Left colon (tissue), 2 donors: ENCODE measurements at regions of chr7 and their contacts with region 1.

Region 1: GRCh38 chr7:43582503-43583423 is at the start of gene STK17A:
- DNase-seq: peak; percentile 85 to 93
- ATAC-seq: peak; percentile 87
- total RNA-seq, gene STK17A: 16.7 to 28.1 TPM

Region 2: GRCh38 chr7:43700059-43700501 is 117.3 kb after region 1 on chr7:
- intact Hi-C with region 1: loop called (anchors 5 kb)
- DNase-seq: no peak
- ATAC-seq: peak; percentile 66

Region 3: DNA sequence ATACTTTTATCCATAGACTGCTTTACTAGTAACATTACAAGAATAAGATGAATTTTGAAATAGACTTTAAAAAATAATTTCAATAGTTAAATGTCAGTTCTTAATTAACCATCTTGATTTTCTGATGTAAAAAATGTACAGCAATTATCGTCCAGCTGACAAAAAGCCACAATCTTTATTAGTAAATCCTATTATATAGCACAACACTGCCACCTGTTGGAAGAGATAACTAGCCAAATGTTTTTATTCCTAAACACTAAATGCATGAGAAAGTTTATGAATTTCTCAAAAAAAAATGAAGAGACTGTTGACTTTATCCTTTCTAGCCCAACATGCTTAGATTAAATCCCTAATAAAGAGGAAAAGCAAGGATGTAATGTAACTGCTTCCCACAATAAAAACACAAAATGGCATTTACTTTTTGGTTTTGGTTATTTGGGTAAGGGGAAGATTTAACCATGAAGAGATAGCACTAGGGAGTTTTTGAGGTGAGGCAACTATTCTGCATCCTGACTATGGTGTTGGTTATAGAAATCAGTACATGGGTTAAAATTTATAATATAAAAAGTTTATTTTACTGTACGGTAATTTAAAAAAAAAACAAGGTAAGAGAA is 138.5 kb after region 1 on chr7:
- intact Hi-C with region 1: loop called in 1 of 2 experiments (anchors 5 kb)
- DNase-seq: no peak
- ATAC-seq: no peak

Region 4: GRCh38 chr7:43834463-43835251 is 251.9 kb after region 1 on chr7:
- intact Hi-C with region 1: loop called in 1 of 2 experiments (anchors 5 kb)
- DNase-seq: no peak
- ATAC-seq: peak; percentile 49